ENCODE measurements at regions of chr3 and their contacts with region 1.

Region 1: GRCh38 chr3:192652727-192653126 is 74.6 kb downstream of the FGF12 start:
- DNase-seq: no peak
- ATAC-seq: no peak

Region 2: DNA sequence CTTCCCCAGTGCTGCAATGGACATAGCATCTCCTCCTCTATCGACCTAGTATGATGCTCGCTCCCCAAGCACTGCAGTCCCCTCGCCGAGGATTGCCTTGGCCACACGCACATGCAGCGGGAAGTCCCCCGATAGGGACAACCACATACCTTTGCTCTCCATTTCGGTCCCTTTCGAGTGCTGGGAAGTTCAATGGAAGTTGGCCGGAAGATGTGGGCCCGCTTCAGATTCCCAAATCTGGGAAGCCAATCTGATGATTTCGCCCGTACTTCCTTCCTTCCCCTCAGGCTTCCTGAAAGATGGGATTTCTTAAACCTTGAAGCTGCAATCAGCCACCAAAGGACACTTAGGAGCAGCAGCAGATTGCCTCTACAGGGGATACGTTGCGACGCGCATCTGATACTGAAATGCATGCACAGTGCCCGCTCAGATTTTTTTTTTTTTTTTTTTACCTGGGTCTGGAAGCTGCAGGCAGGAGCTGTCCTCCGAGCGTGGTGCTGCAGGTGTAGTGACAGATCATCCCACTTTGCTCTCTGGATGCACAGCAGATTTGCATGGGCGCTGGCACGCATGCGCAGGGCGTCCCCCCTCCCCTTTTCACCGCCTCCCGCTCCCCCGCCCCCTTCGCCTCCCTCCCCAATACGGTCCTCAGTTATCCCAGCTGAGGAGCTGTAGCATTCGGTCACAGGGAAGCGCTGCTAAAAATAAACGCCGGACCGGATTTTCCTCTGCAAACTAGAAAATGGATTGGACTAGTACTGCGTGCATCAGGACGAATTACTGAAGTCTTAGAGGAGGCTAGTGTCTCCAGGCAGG is 74.5 kb after region 1 on chr3 and contains the start of gene FGF12:
- intact Hi-C with region 1: loop called in 1 of 2 experiments (anchors 10 kb)
- DNase-seq: peak; percentile 82
- ATAC-seq: peak; percentile 95 to 96
- total RNA-seq, gene FGF12: 245 to 291 TPM